KBM-7 (cell line): ENCODE measurements at regions of chr3 and their contacts with region 1.

Region 1: GRCh38 chr3:132006605-132007204 is 28.1 kb downstream of the CPNE4 start:
- DNase-seq: peak; percentile 31

Region 2: DNA sequence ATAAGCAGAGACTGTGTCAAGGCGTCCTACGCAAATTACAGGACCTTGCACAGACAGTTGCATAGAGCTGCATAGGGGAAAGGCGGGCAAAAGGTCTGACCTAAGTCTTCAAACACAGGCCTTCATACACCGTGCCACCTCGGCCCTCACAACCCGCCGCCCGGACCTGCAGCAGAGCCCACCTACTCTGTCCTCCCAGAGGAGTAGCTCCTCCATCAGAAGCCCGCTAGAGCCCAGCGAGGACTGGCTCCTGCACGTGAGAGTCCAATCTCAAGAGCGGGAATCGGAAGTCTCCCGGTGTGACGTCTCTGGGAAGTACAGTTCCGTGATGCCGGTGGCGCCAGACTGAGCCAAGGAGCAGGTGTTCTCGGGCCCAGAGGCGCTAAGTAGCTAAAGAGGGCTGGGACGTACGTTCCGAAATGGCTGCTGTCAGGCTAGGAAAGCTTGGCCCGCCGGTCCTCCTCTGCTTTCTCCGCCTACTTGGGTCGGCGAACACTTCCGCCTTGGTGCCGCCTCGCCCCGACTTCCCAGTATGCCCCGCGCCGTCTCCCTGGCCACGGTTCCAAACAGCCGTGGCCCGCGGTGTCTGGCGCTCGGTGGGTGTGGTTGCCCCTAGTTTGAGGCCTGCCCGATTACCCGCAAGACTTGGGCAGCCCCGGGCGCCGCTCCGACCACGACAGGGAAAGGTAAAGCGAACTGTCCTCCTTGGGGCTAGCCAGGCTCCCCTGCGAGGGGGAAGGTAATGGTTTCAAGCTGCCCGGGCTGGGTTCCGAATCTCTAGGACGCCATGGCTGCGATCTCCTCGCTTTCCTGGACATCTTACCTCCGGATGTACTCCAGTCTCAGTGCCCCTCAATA is 980.2 kb before region 1 on chr3 and contains the starts of genes ASTE1 and NEK11:
- in situ Hi-C with region 1: loop called (anchors 25 kb)
- DNase-seq: peak; percentile 93

Region 3: DNA sequence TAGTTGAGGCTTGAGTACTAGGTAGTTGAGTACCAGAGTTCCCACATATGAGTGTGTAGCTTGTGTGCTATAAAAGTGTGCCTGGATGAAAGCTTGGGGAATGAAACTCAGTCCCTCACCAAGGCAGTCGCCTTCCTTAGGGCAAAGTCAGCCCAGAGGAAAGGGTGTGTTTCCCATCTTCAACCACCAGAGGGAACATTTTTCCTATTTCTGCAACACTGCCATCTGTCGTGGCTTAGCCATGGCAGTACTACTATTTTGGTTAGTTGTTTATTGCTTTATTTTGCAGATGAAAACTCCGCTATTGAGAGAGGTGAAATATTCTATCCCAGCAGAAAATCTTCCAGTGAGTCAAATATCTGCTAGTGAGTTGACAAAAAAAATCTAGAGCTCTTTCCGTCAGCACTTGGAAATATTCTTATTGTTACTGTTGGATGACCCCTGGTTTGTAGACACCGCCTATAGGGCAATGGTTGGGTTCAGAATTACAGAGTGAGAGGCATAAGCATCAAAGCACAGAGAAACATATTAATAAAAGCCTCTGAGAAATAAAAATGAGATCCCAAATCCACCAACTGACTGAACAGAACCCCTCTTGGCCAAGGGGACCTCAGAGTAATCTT is 211.8 kb before region 1 on chr3:
- in situ Hi-C with region 1: loop called (anchors 25 kb)
- DNase-seq: peak; percentile 73

Region 4: DNA sequence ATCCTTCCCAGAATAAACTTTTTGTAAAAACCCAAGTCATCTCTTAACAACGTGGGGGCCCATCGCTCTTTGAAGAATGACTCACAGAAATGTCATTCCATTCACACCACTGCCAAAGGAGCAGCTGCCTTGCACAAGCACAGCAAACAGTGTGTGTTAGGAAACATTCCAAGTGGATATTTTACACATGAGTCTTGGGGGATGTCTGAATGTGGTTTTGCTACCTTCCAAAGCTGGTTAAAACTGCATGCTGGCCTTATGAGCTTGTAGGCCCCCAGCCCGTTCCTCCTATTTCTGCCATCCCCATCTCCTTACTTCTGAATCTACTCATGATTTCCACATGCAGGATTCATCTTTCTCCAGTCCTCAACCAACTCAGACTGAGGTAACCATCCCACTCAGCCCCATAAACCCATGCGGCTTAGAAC is 102.7 kb before region 1 on chr3:
- in situ Hi-C with region 1: loop called (anchors 25 kb)
- DNase-seq: no peak

Region 5: DNA sequence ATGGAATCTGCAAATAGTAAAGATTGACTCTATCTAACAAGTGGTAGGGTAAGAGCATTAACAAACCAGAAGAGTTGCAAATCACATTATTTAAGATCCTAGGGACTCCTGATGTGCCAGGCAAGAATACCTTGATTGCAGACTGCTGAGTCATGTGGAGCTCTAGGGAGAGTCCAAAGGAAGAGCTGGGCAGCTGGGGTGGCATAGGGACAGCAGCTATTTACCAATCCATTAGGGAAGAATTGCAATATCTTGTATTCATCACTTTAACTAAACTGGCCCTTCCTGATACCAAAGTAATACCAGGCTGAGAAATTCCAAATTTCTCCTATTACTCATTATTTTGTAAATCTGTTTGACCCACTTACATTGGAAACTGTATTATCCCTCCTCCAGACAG is 258.3 kb after region 1 on chr3:
- in situ Hi-C with region 1: no loop called
- DNase-seq: no peak